HEK293 (cell line): ENCODE measurements at regions of chr20 and their contacts with region 1.

Region 1: DNA sequence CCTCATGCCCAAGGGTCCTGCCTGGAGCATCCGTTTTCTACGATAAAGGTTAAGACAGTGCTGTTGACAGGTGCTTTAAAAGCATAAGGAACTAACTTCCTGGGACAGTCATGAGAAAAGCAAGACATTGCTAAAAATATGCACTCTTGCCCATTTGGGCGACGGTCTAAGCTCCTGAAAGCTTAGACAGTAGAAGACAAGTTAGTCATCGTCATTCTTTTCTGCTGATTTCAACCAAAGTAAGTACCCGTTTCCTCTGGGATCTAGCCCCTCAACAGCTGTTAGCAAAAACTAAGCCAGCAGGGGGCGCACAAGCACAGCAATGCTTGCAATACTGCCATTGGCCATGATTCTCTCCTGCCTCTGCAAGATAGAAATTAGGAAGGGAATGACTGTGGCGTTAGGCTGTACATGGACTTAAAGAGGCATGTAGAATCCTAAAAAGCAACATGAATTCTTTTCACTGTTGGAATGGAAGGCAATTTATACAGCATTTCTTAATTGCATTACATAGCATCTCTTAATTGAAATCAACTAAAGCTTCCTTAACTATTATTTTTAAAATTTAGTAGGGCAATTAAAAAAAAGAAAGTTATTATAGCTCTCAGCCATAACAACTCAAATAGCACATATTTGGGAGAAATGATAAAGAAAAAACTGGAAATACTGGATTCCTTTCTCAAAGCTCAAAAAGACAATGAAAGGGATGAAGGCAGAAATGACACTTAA is 147.8 kb upstream of the RALGAPA2 start:
- H3K4me3 ChIP-seq: no peak overlapping the region
- H3K27ac ChIP-seq: no peak overlapping the region
- H3K4me1 ChIP-seq: no peaks in the 10 kb centered on the region
- CTCF ChIP-seq: peak; percentile 88

Region 2: DNA sequence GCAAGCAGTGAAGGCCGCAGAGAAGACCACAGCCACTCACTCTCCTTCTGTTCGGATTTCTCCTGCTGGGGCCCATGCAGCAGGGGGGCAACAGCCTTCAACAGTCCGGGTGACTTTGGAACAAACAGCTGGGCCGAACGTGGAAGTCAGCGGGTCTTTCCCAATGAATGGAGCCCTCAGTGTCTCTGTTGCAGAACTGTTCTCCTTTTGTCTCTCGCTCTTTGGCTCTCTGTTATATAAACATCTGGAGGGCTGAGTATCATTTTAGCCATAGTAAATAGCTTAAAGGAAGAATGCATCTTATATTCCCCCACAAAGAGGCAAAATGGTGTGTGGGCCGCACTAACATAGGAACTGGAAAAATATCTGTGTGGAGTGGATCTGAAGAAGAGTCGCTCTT is 11.1 kb before region 1 on chr20:
- CTCF ChIA-PET with region 1: interaction called, 25 read pairs
- POLR2A ChIA-PET with region 1: no interaction called
- H3K4me3 ChIP-seq: no peak overlapping the region
- H3K27ac ChIP-seq: no peak overlapping the region
- H3K4me1 ChIP-seq: no peaks in the 10 kb centered on the region
- CTCF ChIP-seq: no peak

Region 3: DNA sequence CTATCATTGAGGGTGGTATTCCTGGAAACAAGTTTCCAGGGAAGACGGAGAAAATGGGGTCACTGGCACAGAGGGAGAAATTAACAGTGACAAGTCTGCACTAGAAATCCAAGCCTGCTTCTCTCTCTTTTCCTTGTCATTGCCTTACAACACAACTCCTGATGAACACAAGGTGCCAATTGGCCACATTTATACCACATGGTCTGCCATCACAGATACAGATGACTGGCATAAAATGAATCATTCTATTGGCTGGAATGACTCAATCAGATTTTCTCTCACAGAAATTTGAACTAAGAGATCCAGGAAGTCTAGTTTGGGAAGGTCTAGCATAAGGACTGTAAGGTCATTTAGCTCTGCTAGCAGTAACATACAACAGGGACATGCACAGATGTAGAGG is 55.6 kb after region 1 on chr20:
- CTCF ChIA-PET with region 1: interaction called, 14 read pairs
- POLR2A ChIA-PET with region 1: no interaction called
- H3K4me3 ChIP-seq: no peak overlapping the region
- H3K27ac ChIP-seq: no peak overlapping the region
- H3K4me1 ChIP-seq: no peaks in the 10 kb centered on the region
- CTCF ChIP-seq: no peak

Region 4: GRCh38 chr20:21505161-21505809 is 645.0 kb after region 1 on chr20:
- CTCF ChIA-PET with region 1: interaction called, 49 read pairs
- POLR2A ChIA-PET with region 1: interaction called, 4 read pairs
- H3K4me3 ChIP-seq: peak overlapping the region; percentile 53
- H3K27ac ChIP-seq: peak overlapping the region; percentile 56; the same call in 1 of the 2 replicates
- H3K4me1 ChIP-seq: no peaks in the 10 kb centered on the region
- CTCF ChIP-seq: peak; percentile 89